ENCODE measurements at regions of chrX and their contacts with region 1.

Region 1: DNA sequence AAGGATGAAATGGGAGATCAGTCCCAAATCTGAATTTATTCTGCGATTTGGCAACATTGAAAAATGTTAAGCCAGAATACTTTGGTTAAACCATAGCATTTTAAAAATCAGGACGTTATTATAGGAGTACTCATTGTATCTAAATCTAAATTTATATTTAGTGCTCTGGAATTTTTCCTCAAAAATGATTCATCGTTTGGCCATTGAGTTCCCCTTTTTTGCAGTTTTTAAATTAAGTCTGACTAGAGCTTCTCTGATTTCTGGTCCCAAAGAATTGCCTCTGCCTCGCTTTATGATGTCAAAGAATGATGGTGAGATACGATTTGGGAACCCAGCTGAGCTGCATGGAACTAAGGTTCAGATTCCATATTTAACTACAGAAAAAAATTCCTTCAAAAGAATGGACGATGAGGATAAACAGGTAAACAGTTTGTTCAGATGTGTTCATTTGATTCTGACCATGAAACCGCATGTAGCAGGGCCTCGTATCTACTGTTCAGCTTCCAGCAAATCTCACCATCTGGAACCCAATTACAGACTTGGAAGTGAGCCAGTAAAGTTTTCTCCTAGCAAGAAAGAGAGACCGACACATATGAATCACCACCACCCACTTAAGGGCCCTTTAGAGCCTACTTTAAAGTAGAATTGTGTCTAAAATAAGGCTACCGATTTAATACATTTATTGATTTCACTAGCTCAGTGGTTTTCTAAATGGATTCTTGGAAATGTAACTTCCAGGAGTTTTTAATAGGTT is 75.6 kb downstream of the REPS2 start:
- DNase-seq: no peak
- ATAC-seq: peak in 1 of 4 donors; percentile 47
- H3K4me3 ChIP-seq: no peak overlapping the region
- H3K27ac ChIP-seq: no peak overlapping the region
- H3K4me1 ChIP-seq: no peaks in the 10 kb centered on the region
- H3K27me3 ChIP-seq: peaks cover 0 to 25% (median 0%) of the 10 kb centered on the region in 9 donors
- CTCF ChIP-seq: no peak
- POLR2A ChIP-seq: no peak

Region 2: DNA sequence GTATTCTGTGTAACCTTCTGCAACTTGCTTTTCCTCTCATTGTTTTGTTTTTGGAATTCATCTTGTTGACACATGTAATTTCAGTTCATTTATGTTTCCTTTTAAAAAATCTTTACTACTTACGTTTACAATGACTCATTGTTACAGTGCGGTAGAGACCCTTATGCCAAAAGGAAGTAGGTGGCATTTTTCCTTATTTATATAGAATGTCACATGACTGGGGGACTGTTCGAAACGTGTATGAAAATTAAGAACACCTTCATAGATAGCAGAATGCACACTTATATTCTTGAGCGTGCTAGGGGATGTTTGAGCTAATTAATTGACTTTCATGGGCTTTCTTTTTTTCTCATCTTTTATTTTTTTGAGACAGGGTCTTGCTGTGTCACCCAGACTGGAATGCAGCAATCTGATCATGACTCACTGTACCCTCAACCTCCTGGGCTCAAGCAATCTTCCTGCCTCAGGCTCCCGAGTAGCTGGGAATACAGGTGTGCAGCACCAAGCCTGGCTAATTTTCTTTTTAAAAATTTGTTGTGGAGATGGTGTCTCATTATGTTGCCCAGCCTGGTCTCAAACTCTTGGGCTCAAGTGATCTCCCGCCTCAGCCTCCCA is 68.3 kb before region 1 on chrX:
- intact Hi-C with region 1: loop called in 1 of 10 experiments (anchors 10 kb)
- DNase-seq: no peak
- ATAC-seq: no peak
- H3K4me3 ChIP-seq: no peak overlapping the region
- H3K27ac ChIP-seq: no peak overlapping the region
- H3K4me1 ChIP-seq: peaks cover 0 to 14% (median 0%) of the 10 kb centered on the region in 12 donors
- H3K27me3 ChIP-seq: peaks cover 0 to 31% (median 0%) of the 10 kb centered on the region in 9 donors
- CTCF ChIP-seq: no peak
- POLR2A ChIP-seq: no peak